OCI-LY7 (cell line): ENCODE measurements at regions of chr12 and their contacts with region 1.

Region 1: DNA sequence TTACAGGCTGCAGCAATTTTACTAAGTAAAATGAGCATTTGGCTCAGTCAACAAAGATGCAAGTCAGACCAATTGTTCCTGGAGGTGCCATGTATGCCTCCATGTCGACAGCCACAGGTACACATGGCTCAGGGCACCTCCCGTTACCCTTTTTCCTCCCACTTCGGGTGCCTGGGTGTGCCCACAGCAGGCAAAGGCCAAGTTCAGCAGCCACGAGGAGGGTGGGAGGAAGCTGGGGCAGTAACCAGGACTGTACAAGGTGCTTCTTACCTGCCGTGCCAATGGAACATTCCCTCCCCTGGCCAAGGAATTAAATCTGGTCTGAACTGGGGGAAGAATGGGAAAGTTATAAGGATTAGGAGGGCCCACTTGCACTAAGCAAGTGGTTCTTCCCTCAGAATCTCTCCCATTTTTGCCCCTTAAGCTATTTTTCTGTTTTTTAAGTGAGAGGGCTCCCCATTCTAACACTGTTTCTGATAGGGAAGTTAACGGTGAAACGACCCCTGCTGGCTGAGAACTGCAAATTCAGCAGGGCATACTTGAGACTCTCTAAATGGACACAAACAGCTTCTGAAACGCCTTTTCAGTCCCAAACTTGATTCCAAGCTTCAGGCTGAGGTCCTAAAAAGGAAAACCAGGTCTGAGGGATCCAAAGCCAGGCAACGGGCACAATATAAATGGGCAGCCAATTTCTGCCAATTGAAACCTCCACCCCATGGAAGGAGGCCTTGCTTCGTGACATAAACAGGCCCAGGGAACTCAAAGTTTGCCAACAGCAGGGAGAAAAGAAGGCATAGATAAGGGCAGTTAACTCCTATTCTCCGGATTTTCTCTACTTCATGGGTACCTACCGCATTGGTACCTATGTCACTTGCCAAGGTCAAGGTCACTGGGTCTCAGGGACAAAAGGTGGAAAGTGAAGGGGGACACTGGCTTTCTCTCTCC is 24.8 kb downstream of the CLECL1 start:
- DNase-seq: peak; percentile 84
- H3K4me3 ChIP-seq: peak overlapping the region; percentile 14
- H3K27ac ChIP-seq: peak overlapping the region; percentile 56
- H3K4me1 ChIP-seq: peaks cover 71% of the 10 kb centered on the region
- CTCF ChIP-seq: peak; percentile 95

Region 2: DNA sequence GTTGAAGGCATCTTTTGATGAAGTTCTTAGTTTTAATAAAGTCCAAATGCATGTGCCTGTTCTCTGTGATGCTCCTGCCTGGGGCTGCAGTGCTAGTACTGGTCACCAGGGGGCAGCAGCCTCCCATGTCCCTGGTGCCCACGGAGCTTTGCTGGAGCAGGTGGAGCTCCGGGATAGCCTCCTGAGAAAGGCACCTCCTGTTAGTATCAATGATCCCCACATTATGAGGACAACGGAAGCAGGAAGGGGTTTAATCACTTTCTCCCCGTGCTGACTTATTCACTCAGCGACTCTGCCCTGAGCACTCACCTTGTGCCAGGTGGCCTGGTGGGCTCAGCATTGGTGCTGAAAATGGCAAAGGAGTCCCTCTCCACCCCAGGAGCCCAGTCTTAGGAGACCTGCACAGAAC is 376.9 kb before region 1 on chr12:
- CTCF ChIA-PET with region 1: no interaction called
- POLR2A ChIA-PET with region 1: no interaction called
- intact Hi-C with region 1: loop called (anchors 5 kb)
- DNase-seq: peak; percentile 62
- H3K4me3 ChIP-seq: no peak overlapping the region
- H3K27ac ChIP-seq: no peak overlapping the region
- H3K4me1 ChIP-seq: no peaks in the 10 kb centered on the region
- CTCF ChIP-seq: peak; percentile 100

Region 3: DNA sequence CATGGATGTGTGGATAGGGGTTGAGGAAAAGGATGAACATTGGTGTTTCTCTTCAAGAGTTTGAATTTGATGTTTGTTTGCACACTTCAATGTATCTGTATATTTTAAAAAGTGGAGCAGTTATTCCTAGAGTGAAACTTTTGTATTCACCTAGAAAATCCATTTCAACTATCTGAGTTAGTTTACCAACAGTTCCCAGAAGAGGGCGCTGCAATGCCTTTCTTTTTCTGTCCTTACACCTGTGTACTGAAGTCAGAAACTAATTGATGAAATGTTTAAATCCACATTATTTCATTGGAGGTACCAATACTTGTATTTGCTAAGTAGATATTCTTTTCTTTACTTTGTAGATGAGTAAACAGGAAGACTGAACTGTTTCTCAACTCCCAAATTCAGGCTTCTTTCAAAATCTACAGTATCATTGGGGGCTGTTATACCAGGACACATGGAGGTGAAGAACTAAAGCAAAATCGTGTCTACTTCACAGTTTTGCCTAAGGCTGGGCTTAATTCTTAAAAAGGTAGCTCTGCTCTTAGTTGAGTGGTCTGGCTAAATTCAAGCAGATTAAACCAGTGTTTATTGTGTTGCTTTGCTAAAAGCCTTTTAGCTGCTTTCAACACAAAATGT is 73.8 kb before region 1 on chr12:
- CTCF ChIA-PET with region 1: interaction called, 3 read pairs
- POLR2A ChIA-PET with region 1: interaction called, 3 read pairs
- intact Hi-C with region 1: loop called (anchors 1 kb)
- DNase-seq: peak; percentile 83
- H3K4me3 ChIP-seq: no peak overlapping the region
- H3K27ac ChIP-seq: peak overlapping the region; percentile 22
- H3K4me1 ChIP-seq: peaks cover 32% of the 10 kb centered on the region
- CTCF ChIP-seq: peak; percentile 100

Region 4: DNA sequence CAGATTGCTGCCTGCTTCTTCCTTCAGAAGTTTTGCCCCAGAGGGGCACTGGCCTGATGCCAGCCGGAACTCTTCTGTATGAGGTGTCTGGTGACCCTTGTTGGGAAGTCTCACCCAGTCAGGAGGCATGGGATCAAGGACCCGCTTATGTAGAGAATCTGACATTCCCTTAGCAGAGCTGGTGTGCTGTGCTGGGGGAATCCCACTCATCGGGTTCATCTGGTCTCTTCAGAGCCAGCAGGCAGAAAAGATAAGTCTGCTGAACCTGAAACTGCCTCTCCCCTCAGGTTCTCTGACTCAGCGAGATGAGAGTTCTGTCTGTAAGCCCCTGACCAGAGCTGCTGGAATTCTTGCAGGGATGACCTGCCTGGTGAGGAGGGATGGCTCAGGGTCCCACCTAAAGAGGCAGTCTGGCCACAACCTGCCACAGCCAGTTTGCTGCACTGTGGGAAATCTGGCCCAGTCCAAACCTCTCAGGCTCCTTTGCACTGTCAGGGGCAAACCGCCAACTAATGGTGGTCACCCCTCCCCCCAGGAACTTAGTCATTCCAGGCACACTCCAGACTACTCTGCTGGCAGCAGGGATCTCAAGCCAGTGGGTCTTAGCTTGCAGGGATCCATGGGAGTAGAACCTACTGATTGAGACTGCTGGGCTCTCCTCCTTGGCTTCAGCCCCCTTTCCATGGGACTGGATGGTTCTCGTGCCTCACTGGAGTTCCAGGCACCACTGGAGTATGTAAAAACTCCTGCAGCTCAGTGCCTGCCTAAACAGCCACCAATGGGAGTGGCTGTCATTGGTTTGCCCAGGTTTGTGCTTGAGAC is 34.5 kb before region 1 on chr12:
- CTCF ChIA-PET with region 1: no interaction called
- POLR2A ChIA-PET with region 1: interaction called, 24 read pairs
- intact Hi-C with region 1: no loop called
- DNase-seq: peak; percentile 43
- H3K4me3 ChIP-seq: peak overlapping the region; percentile 68
- H3K27ac ChIP-seq: peak overlapping the region; percentile 87
- H3K4me1 ChIP-seq: peaks cover 93% of the 10 kb centered on the region
- CTCF ChIP-seq: no peak

Region 5: GRCh38 chr12:9721394-9722092 is 13.4 kb after region 1 on chr12:
- CTCF ChIA-PET with region 1: interaction called, 7 read pairs
- POLR2A ChIA-PET with region 1: interaction called, 29 read pairs
- intact Hi-C with region 1: no loop called
- DNase-seq: peak; percentile 92
- H3K4me3 ChIP-seq: peak overlapping the region; percentile 42
- H3K27ac ChIP-seq: peak overlapping the region; percentile 99
- H3K4me1 ChIP-seq: peaks cover 100% of the 10 kb centered on the region
- CTCF ChIP-seq: no peak

Region 6: GRCh38 chr12:9731797-9732196 is 23.7 kb after region 1 on chr12:
- CTCF ChIA-PET with region 1: interaction called, 7 read pairs
- POLR2A ChIA-PET with region 1: interaction called, 29 read pairs
- intact Hi-C with region 1: loop called (anchors 1 kb)
- DNase-seq: peak; percentile 77
- H3K4me3 ChIP-seq: peak overlapping the region; percentile 78
- H3K27ac ChIP-seq: peak overlapping the region; percentile 99
- H3K4me1 ChIP-seq: peaks cover 77% of the 10 kb centered on the region
- CTCF ChIP-seq: no peak

Region 7: GRCh38 chr12:9741726-9742125 is 33.6 kb after region 1 on chr12:
- CTCF ChIA-PET with region 1: no interaction called
- POLR2A ChIA-PET with region 1: interaction called, 14 read pairs
- intact Hi-C with region 1: no loop called
- DNase-seq: peak; percentile 86
- H3K4me3 ChIP-seq: peak overlapping the region; percentile 54
- H3K27ac ChIP-seq: peak overlapping the region; percentile 93
- H3K4me1 ChIP-seq: peaks cover 83% of the 10 kb centered on the region
- CTCF ChIP-seq: no peak